ENCODE measurements at regions of chr4 and their contacts with region 1.

Region 1: GRCh38 chr4:39638354-39639240 is at the start of gene SMIM14:
- DNase-seq: peak; percentile 92
- ATAC-seq: peak; percentile 82
- H3K4me3 Mint-ChIP-seq: peak within 1 kb of the TSS; percentile 96
- H3K27ac Mint-ChIP-seq: peak within 1 kb of the TSS; percentile 97
- H3K4me1 Mint-ChIP-seq: peaks cover 58% of the 10 kb centered on the region
- H3K27me3 Mint-ChIP-seq: no peaks in the 10 kb centered on the region
- CTCF ChIP-seq: no peak
- total RNA-seq, gene SMIM14: 83.1 and 86.5 TPM in 2 replicates

Region 2: DNA sequence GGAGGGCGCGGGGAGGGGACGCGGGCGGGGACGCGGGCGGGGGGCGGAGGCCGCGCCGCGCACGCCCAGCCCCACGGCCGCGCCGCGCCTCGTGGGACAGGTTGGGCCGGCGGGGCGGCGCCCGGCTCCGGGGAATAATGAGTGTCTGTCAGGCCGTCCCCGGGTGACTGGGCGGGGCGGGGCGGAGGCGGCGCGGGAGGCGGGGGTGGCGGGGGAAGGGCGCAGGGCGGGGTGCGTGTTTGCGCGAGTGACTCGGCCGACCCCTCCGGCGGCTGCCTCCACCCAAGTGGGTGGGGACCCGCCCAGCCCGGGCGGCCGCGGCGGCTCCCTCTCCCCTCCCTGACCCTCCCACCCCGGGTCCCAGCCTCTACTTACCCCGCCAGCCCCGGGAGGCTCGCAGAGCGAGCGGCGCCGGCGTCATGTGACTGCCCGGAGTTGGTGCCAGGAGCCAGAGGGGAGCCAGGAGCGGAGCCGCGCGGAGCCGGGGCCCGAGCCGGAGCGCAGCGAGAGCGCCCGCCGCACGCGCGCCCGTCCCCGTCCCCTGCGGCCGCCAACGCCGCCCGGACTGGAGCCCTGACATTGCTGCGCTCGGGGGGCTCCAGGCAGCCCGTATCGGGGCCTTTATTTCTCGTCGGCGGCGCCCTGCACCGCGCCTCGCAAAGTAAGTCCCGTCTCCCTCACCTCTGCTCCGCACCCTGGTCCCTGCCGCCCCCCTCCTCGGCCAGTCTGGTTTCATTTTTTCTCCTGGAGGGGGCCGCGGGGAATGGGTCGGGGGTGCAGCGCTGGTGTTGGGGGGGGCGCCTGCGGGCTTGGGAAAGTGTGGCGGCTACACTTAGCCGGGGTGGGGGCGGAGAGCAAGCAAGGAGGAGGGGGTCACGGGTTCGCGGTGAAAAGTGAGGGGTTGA is 974.5 kb before region 1 on chr4 and contains the start of gene KLF3:
- CTCF ChIA-PET with region 1: no interaction called
- POLR2A ChIA-PET with region 1: no interaction called
- intact Hi-C with region 1: loop called (anchors 10 kb)
- DNase-seq: no peak
- ATAC-seq: peak; percentile 82
- H3K4me3 Mint-ChIP-seq: peak within 1 kb of the TSS; percentile 84
- H3K27ac Mint-ChIP-seq: peak within 1 kb of the TSS; percentile 88
- H3K4me1 Mint-ChIP-seq: peaks cover 67% of the 10 kb centered on the region
- H3K27me3 Mint-ChIP-seq: no peaks in the 10 kb centered on the region
- CTCF ChIP-seq: no peak
- total RNA-seq, gene KLF3: 14.5 and 15.9 TPM in 2 replicates

Region 3: DNA sequence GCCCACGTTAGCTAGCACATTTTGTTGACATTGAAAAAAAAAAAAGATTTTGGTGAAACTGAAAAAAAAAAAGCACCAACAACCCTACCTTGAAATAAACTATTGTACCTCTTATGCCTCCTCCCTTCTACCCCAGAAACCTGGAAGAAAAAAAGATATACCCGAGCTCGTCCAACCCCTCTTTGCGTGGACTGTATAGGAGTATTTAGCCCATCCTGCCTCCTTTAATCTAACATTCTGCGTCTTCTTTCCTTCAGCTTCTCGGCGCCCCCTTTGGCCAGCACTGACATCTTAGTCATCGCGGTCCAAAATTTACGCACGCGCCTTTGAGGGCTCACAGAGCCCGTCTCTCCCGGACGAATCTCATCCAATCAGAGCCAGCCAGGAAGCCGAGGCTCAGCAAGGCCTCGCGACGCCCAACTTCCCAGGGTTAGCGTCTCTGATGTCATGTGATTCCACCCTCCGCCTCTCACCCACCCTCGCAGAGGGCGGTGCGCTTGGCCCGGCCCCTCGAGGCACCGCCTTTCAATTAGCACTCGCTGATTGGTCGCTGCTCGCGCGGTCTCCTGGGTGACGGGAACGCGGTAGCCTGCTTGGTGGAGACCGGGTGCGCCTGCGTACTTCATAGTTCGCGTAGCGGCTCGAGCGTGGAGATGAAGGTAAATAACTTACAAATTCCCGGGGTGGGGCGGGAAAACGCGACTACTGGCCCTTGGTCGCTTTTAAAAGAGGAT is 456.5 kb before region 1 on chr4 and contains the start of gene WDR19:
- CTCF ChIA-PET with region 1: no interaction called
- POLR2A ChIA-PET with region 1: no interaction called
- intact Hi-C with region 1: loop called (anchors 10 kb)
- DNase-seq: peak; percentile 93
- ATAC-seq: peak; percentile 97
- H3K4me3 Mint-ChIP-seq: no peak within 1 kb of the TSS
- H3K27ac Mint-ChIP-seq: peak within 1 kb of the TSS; percentile 46
- H3K4me1 Mint-ChIP-seq: peaks cover 7% of the 10 kb centered on the region
- H3K27me3 Mint-ChIP-seq: no peaks in the 10 kb centered on the region
- CTCF ChIP-seq: no peak
- total RNA-seq, gene WDR19: 23.8 and 28.4 TPM in 2 replicates

Region 4: GRCh38 chr4:39469429-39470077 is 169.0 kb before region 1 on chr4:
- CTCF ChIA-PET with region 1: interaction called, 18 read pairs
- POLR2A ChIA-PET with region 1: interaction called, 11 read pairs
- intact Hi-C with region 1: loop called (anchors 1 kb)
- DNase-seq: no peak
- ATAC-seq: peak; percentile 99
- H3K4me3 Mint-ChIP-seq: peak overlapping the region; percentile 59
- H3K27ac Mint-ChIP-seq: peak overlapping the region; percentile 88
- H3K4me1 Mint-ChIP-seq: peaks cover 8% of the 10 kb centered on the region
- H3K27me3 Mint-ChIP-seq: no peaks in the 10 kb centered on the region
- CTCF ChIP-seq: peak; percentile 74

Region 5: GRCh38 chr4:39571054-39571453 is 67.5 kb before region 1 on chr4:
- CTCF ChIA-PET with region 1: no interaction called
- POLR2A ChIA-PET with region 1: interaction called, 15 read pairs
- intact Hi-C with region 1: loop called (anchors 2 kb)
- DNase-seq: no peak
- ATAC-seq: no peak
- H3K4me3 Mint-ChIP-seq: no peak overlapping the region
- H3K27ac Mint-ChIP-seq: peak overlapping the region; percentile 37
- H3K4me1 Mint-ChIP-seq: peaks cover 32% of the 10 kb centered on the region
- H3K27me3 Mint-ChIP-seq: no peaks in the 10 kb centered on the region
- CTCF ChIP-seq: no peak

Region 6: DNA sequence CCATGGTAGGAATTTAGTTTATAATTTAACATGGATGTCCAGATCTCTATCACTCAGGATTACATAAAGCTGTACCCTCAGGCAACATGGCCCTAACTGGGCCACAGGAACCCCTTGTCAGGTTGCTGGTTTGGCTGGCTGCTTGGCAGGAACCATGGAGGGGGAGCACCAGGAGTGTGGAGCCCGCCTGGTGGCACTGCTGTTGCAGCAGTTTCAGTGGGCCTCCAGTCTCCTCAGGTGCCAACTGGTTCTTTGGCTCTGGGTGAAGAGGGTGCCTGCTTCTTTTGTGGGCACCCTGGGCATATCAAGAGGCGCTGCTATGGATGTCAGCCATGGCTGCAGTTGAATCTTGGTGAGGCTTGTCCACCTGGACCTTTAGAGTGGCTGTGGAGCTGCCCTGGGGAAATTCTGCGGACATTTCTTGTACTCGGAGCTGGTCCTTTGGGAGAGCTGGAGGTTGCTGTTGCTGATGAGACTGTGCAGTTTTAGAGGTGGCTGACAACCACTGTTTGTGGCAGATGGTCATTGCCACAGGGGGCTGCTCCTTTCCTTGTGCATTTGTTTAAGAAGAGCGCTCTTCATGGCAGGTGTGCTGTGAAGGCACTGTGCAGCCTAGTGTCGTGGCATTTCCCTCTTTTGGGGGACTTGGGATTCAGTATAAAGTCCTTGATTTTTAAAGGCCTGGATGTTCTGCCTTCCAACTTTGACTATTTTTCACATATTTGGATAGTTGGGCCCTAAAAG is 10.4 kb after region 1 on chr4:
- CTCF ChIA-PET with region 1: no interaction called
- POLR2A ChIA-PET with region 1: interaction called, 14 read pairs
- intact Hi-C with region 1: no loop called
- DNase-seq: no peak
- ATAC-seq: no peak
- H3K4me3 Mint-ChIP-seq: no peak overlapping the region
- H3K27ac Mint-ChIP-seq: no peak overlapping the region
- H3K4me1 Mint-ChIP-seq: peaks cover 21% of the 10 kb centered on the region
- H3K27me3 Mint-ChIP-seq: no peaks in the 10 kb centered on the region
- CTCF ChIP-seq: no peak

Region 7: GRCh38 chr4:39977489-39978377 is 339.1 kb after region 1 on chr4 and contains the start of gene PDS5A:
- CTCF ChIA-PET with region 1: no interaction called
- POLR2A ChIA-PET with region 1: interaction called, 3 read pairs
- intact Hi-C with region 1: loop called (anchors 1 kb)
- DNase-seq: peak; percentile 91
- ATAC-seq: peak; percentile 86
- H3K4me3 Mint-ChIP-seq: peak within 1 kb of the TSS; percentile 87
- H3K27ac Mint-ChIP-seq: peak within 1 kb of the TSS; percentile 92
- H3K4me1 Mint-ChIP-seq: peaks cover 32% of the 10 kb centered on the region
- H3K27me3 Mint-ChIP-seq: no peaks in the 10 kb centered on the region
- CTCF ChIP-seq: peak; percentile 27
- total RNA-seq, gene PDS5A: 91.9 and 103 TPM in 2 replicates